GM12878 (cell line): ENCODE measurements at regions of chr13 and their contacts with region 1.

Region 1: DNA sequence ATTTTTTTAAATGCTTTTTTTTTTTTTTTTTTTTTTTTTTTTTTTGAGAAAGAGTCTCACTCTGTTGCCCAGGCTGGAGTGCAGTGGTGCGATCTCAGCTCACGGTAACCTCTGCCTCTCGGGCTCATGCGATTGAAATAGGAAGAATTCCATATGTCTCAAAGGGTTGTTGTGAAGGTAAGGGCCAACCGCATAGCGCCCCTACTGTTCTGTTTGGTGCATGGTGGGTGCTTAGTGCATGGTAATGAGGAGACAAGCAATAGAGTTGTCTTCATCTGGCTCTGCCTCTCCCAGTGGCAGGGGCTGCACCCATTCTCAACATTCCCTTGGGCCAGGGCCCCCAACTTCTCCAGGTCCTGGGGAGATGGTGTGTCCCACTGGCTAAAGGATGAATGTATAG is 68.7 kb downstream of the RASL11A start:
- DNase-seq: no peak
- ATAC-seq: peak; percentile 96
- H3K4me3 ChIP-seq: no peak overlapping the region
- H3K27ac ChIP-seq: no peak overlapping the region
- H3K4me1 ChIP-seq: no peaks in the 10 kb centered on the region
- H3K27me3 ChIP-seq: peaks cover 0 to 6% of the 10 kb centered on the region in 2 experiments; a peak in 2 of 4 replicates
- CTCF ChIP-seq: peak; percentile 59 to 76 (median 67)
- EP300 ChIP-seq: no peak
- POLR2A ChIP-seq: no peak
- RAD21 ChIP-seq: peak; percentile 41; the same call in 1 of the 2 replicates

Region 2: DNA sequence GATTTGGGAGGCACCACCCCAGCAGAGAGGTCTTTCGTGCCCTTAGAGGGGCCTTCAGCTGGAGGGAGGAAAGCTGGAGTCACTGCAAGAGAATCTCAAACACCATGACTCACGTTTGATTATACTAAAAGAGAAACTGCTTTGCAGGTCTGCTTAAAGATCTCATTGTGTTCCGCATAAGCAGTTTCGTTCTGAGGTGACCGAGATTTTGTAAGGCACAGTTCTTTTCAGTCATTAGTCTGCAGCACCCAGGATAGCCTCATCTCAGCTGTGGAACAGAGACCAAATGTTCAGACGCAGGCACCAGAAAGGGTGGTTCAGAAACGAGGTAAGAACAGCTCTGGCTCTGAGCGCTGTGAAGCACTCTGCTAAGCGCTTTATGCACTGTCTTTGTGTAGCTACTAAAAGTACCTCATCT is 13.9 kb after region 1 on chr13:
- CTCF ChIA-PET with region 1: interaction called, 21 read pairs
- POLR2A ChIA-PET with region 1: no interaction called
- RAD21 ChIA-PET with region 1: interaction called, 5 read pairs
- SMC1A ChIA-PET with region 1: interaction called, 12 read pairs
- in situ Hi-C with region 1: no loop called
- intact Hi-C with region 1: no loop called
- DNase-seq: peak; percentile 89
- ATAC-seq: peak; percentile 99
- H3K4me3 ChIP-seq: peak overlapping the region; percentile 42; the same call in 1 of the 2 replicates
- H3K27ac ChIP-seq: peak overlapping the region; percentile 40; the same call in 1 of the 2 replicates
- H3K4me1 ChIP-seq: peaks cover 12% of the 10 kb centered on the region
- H3K27me3 ChIP-seq: no peaks in the 10 kb centered on the region
- CTCF ChIP-seq: no peak
- EP300 ChIP-seq: peak; percentile 17 to 59; a peak in 2 of 4 replicates
- POLR2A ChIP-seq: no peak
- RAD21 ChIP-seq: 0 out of 2 replicates have a peak, but pooled peaks have one; percentile 13

Region 3: DNA sequence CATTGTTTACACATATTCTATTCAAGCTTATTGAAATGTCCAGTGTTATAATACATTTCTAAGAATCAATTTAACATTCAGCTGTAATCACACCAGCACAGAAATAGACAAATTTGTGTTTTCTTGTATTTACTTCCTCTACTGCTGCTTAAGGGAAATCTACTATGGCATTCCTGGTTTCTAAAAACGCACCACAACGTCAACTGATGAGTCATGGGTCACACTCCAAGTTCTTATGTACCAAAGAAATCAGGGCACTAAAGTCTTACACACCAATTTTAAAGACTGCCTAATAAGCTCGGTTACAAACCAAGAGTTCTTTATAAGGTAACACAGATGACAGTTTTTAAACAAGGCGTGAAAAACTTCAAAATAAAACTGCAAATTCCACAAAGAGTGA is 267.8 kb after region 1 on chr13:
- CTCF ChIA-PET with region 1: no interaction called
- POLR2A ChIA-PET with region 1: no interaction called
- RAD21 ChIA-PET with region 1: no interaction called
- SMC1A ChIA-PET with region 1: no interaction called
- in situ Hi-C with region 1: no loop called
- intact Hi-C with region 1: no loop called
- DNase-seq: no peak
- ATAC-seq: no peak; the same call in 2 of the 3 replicates
- H3K4me3 ChIP-seq: no peak overlapping the region
- H3K27ac ChIP-seq: no peak overlapping the region
- H3K4me1 ChIP-seq: peaks cover 15% of the 10 kb centered on the region; the same call in 1 of the 2 replicates
- H3K27me3 ChIP-seq: no peaks in the 10 kb centered on the region
- CTCF ChIP-seq: no peak
- EP300 ChIP-seq: no peak
- POLR2A ChIP-seq: no peak
- RAD21 ChIP-seq: no peak